Activated naive CD4-positive, alpha-beta T cell treated with anti-CD3 and anti-CD28 coated beads for 36 hours (primary cell): ENCODE measurements at regions of chr19 and their contacts with region 1.

Region 1: DNA sequence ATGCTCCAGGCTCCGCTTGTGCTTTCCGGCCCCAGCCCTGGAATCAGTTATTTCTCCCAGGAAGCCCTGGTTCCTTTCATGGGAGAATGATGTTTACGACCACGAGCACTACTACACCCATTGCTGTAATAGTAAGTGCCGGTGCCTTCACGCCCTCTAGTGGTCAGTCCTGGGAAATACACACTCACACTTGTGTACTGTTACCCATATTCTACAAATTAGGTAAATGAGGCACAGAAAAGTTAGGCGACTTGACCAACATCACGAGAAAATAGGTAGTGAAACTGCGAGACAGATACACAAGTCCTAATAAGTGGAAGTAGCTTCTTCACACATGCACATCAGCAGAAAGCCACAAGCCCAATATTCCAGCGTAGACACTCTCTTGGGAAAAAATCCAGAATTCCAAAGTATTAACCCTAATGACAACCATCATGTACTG is 21.7 kb downstream of the CEACAM21 start:
- DNase-seq: peak; percentile 92
- H3K4me3 Mint-ChIP-seq: peak overlapping the region; percentile 49
- H3K27ac Mint-ChIP-seq: no peak overlapping the region
- H3K4me1 Mint-ChIP-seq: peaks cover 9% of the 10 kb centered on the region
- H3K27me3 Mint-ChIP-seq: peaks cover 3% of the 10 kb centered on the region

Region 2: DNA sequence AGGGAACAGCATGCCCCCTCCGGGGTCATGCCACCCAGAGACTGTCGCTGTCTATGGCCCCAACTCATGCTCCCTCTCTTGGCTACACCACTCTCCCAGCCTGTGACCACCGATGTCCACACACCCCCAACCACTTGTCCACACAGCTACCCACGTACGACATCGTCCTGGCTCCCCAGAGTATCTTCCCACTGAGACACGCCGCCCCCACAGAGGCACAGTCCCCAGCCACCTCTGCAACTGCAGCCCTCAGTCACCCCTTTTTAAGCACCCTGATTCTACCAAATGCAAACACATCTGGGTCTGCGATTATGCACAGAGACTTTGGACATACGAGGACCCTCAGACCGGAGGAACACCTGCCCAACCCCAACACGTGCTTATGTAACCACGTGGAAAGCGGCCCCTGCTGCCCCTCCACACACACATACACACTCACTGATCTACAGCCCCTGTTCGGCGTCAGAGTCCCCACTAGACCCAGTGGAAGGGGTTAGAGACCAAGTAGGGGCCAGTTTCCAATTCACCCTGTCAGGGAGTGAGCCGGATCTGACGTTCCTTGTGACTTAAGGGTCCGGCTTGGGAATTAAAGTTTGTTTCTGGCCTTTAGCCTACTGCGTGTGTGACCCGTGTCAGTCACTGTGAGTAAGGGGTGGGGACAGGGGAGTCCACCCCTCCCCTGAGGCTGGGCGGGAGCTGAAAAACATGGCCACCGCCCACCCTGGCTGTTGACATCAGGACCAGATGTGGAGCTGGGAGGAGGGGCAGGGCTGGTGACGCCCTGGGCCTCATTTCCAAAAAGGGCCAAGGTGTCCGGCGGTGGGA is 390.5 kb before region 1 on chr19:
- CTCF ChIA-PET with region 1: no interaction called
- intact Hi-C with region 1: loop called (anchors 1 kb)
- DNase-seq: no peak
- H3K4me3 Mint-ChIP-seq: no peak overlapping the region
- H3K27ac Mint-ChIP-seq: no peak overlapping the region
- H3K4me1 Mint-ChIP-seq: peaks cover 4% of the 10 kb centered on the region
- H3K27me3 Mint-ChIP-seq: no peaks in the 10 kb centered on the region

Region 3: DNA sequence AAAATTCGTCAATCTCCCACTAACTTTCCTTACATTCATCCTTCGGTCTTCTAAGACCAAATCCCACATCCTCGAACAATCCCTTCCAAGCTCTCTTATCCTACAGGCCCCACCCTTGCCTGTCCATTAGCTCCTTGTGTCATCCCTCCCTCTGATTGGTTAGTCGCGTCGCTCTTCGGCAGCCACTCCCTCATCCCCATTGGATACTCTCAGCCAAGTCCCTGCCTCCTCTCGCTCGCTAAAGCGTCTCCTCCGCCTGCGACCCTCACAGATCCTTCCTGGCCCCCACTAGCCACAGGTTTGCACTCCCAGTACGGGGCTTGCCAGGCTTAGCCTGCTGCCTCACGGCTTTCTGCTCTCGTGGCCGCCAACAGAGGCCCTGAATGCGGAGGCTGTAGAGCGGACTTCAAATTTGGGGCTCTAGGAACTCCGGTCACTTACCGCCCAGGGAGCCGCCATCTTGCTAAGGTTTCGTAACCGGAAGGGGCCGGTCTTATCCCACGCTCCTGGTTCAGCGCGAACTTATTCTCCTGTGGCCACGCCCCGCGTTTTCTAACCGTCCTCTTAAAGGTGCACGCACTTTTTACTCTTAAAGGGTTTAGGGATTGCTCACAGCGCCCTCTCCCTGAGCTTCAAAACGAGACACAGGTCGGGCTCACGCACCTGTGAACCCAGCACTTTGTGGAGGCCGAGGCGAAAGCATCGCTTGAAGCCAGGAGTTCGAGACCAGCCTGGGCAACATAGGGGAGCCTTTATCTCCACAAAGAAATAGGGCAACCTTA is 158.0 kb before region 1 on chr19 and contains the start of gene DMAC2:
- CTCF ChIA-PET with region 1: interaction called, 6 read pairs
- intact Hi-C with region 1: loop called (anchors 2 kb)
- DNase-seq: peak; percentile 99
- H3K4me3 Mint-ChIP-seq: no peak within 1 kb of the TSS
- H3K27ac Mint-ChIP-seq: no peak within 1 kb of the TSS
- H3K4me1 Mint-ChIP-seq: peaks cover 13% of the 10 kb centered on the region
- H3K27me3 Mint-ChIP-seq: no peaks in the 10 kb centered on the region
- total RNA-seq, gene DMAC2: 51.5 to 53.8 TPM

Region 4: GRCh38 chr19:41457241-41457640 is 140.4 kb before region 1 on chr19:
- CTCF ChIA-PET with region 1: interaction called, 92 read pairs
- intact Hi-C with region 1: no loop called
- DNase-seq: no peak
- H3K4me3 Mint-ChIP-seq: no peak overlapping the region
- H3K27ac Mint-ChIP-seq: no peak overlapping the region
- H3K4me1 Mint-ChIP-seq: peaks cover 15% of the 10 kb centered on the region
- H3K27me3 Mint-ChIP-seq: no peaks in the 10 kb centered on the region

Region 5: GRCh38 chr19:41541990-41542584 is 55.5 kb before region 1 on chr19:
- CTCF ChIA-PET with region 1: interaction called, 9 read pairs
- intact Hi-C with region 1: loop called (anchors 1 kb)
- DNase-seq: peak; percentile 93
- H3K4me3 Mint-ChIP-seq: peak overlapping the region; percentile 41
- H3K27ac Mint-ChIP-seq: peak overlapping the region; percentile 82
- H3K4me1 Mint-ChIP-seq: peaks cover 65% of the 10 kb centered on the region
- H3K27me3 Mint-ChIP-seq: no peaks in the 10 kb centered on the region

Region 6: DNA sequence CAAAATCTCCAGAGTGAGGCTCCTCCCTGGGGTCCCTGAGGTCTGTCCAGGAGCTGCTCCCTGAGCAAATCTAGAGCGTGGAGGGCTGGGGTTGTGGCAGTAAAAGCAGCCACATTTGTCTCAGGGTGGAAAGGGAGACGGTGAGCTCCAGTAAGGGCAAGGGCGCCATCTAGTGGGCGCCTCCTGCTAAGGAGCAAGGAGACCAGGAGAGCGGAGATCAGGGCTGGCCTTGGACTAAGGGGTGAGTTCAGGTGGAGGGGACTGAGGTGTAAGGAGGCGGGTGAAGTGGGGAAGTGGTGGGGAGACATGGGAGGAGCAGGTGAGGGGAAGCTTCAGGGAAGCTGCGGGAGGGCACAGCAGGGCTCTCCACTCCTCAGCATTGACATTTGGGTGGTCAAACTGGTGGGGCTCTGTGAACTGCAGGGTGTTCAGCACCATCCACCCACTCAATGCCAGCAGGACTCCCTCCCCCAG is 26.9 kb before region 1 on chr19:
- CTCF ChIA-PET with region 1: interaction called, 60 read pairs
- intact Hi-C with region 1: loop called (anchors 1 kb)
- DNase-seq: peak; percentile 91
- H3K4me3 Mint-ChIP-seq: no peak overlapping the region
- H3K27ac Mint-ChIP-seq: peak overlapping the region; percentile 28
- H3K4me1 Mint-ChIP-seq: peaks cover 35% of the 10 kb centered on the region
- H3K27me3 Mint-ChIP-seq: no peaks in the 10 kb centered on the region